PC-3 (cell line): ENCODE measurements at regions of chr10 and their contacts with region 1.

Region 1: GRCh38 chr10:239109-239508 is 103.9 kb downstream of the ZMYND11 start:
- DNase-seq: peak; percentile 76
- ATAC-seq: peak; percentile 96
- H3K4me3 ChIP-seq: no peak overlapping the region
- H3K27ac ChIP-seq: peak overlapping the region; percentile 43
- H3K4me1 ChIP-seq: peaks cover 8% of the 10 kb centered on the region
- H3K27me3 ChIP-seq: no peaks in the 10 kb centered on the region
- CTCF ChIP-seq: peak; percentile 58

Region 2: GRCh38 chr10:178208-178607 is 60.9 kb before region 1 on chr10:
- CTCF ChIA-PET with region 1: no interaction called
- POLR2A ChIA-PET with region 1: no interaction called
- intact Hi-C with region 1: loop called (anchors 5 kb)
- DNase-seq: peak; percentile 38
- ATAC-seq: peak; percentile 43
- H3K4me3 ChIP-seq: no peak overlapping the region
- H3K27ac ChIP-seq: no peak overlapping the region
- H3K4me1 ChIP-seq: no peaks in the 10 kb centered on the region
- H3K27me3 ChIP-seq: no peaks in the 10 kb centered on the region
- CTCF ChIP-seq: peak; percentile 51

Region 3: DNA sequence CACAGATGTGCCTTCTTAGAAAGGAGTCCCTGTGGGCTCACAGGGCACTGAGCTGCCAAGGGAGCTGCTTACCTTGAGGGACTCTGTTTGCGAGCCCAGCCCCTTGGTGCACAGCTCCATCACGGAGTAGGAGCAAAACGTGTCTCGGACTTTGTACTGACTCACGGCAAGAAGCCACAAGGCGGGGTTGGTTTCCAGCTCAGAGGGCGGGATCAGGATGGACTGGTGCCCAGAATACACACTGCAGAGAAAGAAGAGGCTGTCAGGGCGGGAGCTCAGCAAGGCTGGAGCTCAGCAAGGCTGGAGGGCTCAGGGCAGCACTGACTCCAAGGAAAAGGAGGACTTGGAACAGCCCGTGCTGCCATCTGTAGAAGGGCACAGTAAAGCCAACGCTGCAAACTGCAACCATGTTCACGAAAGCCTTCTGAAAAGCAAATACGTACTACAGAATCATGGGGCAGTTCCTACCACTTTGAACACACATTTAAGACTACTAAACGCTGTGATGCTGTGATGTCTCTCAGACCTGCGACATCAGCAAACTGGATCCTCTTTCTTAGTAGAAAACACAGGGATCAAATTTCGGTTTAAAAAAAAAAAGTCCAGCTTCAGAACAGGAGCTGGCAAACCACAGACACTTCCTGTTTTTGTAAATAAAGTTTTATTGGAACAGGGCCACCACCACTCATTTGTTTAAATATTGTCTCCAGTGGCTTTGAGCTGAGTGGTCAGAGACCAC is 90.4 kb after region 1 on chr10:
- CTCF ChIA-PET with region 1: no interaction called
- POLR2A ChIA-PET with region 1: no interaction called
- intact Hi-C with region 1: loop called (anchors 2 kb)
- DNase-seq: peak; percentile 85
- ATAC-seq: peak; percentile 94
- H3K4me3 ChIP-seq: peak overlapping the region; percentile 47
- H3K27ac ChIP-seq: peak overlapping the region; percentile 91
- H3K4me1 ChIP-seq: peaks cover 17% of the 10 kb centered on the region
- H3K27me3 ChIP-seq: no peaks in the 10 kb centered on the region
- CTCF ChIP-seq: no peak

Region 4: GRCh38 chr10:543862-544822 is 305.0 kb after region 1 on chr10:
- CTCF ChIA-PET with region 1: no interaction called
- POLR2A ChIA-PET with region 1: interaction called, 52 read pairs
- intact Hi-C with region 1: no loop called
- DNase-seq: no peak
- ATAC-seq: no peak
- H3K4me3 ChIP-seq: no peak overlapping the region
- H3K27ac ChIP-seq: no peak overlapping the region
- H3K4me1 ChIP-seq: peaks cover 8% of the 10 kb centered on the region
- H3K27me3 ChIP-seq: no peaks in the 10 kb centered on the region
- CTCF ChIP-seq: no peak

Region 5: GRCh38 chr10:794466-794865 is 555.4 kb after region 1 on chr10:
- CTCF ChIA-PET with region 1: no interaction called
- POLR2A ChIA-PET with region 1: no interaction called
- intact Hi-C with region 1: loop called (anchors 2 kb)
- DNase-seq: peak; percentile 25
- ATAC-seq: no peak
- H3K4me3 ChIP-seq: no peak overlapping the region
- H3K27ac ChIP-seq: no peak overlapping the region
- H3K4me1 ChIP-seq: no peaks in the 10 kb centered on the region; the same call in 1 of the 2 replicates
- H3K27me3 ChIP-seq: no peaks in the 10 kb centered on the region
- CTCF ChIP-seq: peak; percentile 31; the same call in 1 of the 2 replicates